RWPE1 (cell line): ENCODE measurements at regions of chr11 and their contacts with region 1.

Region 1: DNA sequence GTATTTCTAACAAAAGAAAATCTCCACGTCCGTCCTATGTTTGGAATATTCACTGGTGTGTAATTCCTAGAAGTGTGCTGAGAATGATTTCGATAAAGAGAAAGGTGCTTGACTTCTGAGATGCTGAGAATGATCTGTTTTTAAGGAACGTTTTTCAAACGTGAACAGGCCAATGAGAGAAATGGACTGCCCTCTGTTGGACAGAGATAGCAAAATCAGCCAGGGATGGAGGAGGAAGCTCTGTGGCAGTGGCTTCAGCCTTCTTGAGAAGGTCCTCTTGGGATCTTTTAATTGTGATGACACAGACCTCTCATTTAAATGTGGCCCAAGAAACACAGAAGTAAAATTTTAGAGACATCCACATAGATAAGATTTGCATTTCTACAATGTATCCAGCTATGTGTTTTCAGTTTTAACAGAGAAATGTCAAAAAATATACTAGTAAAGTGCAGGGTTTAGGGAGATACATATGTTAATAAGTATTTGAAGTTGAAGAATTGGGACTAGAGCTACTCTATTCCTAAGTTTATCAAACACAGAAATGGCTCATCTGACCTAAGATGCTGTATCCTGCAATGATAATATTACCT is 84.0 kb upstream of the RCN1 start:
- DNase-seq: peak; percentile 48
- H3K27ac ChIP-seq: no peak overlapping the region
- CTCF ChIP-seq: peak; percentile 50

Region 2: GRCh38 chr11:31641477-31642062 is 365.3 kb before region 1 on chr11:
- CTCF ChIA-PET with region 1: interaction called, 11 read pairs
- POLR2A ChIA-PET with region 1: no interaction called
- DNase-seq: peak; percentile 16
- H3K27ac ChIP-seq: no peak overlapping the region
- CTCF ChIP-seq: peak; percentile 72

Region 3: DNA sequence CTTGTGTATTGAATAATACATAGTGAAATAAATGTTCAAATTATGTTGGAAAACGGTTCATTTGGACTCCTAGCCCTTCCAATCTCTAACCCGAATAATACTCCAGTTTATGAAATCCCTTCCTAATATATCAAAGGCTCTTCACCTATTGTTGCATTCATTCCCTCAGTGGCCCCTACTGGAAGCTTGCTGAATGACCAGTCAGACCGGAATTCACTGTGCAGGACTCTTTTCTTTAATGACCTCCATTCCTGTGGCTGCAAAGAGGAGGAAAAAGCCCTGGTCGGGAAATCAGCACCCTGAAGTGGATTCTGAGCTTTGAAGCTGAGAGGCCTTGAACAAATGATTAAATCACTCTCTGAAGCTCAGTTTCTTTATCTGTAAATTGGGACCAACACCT is 64.9 kb after region 1 on chr11:
- CTCF ChIA-PET with region 1: no interaction called
- POLR2A ChIA-PET with region 1: no interaction called
- DNase-seq: peak; percentile 44
- H3K27ac ChIP-seq: no peak overlapping the region
- CTCF ChIP-seq: no peak

Region 4: GRCh38 chr11:32100495-32100894 is 93.6 kb after region 1 on chr11:
- CTCF ChIA-PET with region 1: no interaction called
- POLR2A ChIA-PET with region 1: no interaction called
- DNase-seq: no peak
- H3K27ac ChIP-seq: no peak overlapping the region
- CTCF ChIP-seq: no peak